B cell (primary cell): ENCODE measurements at regions of chr3 and their contacts with region 1.

Region 1: GRCh38 chr3:53130179-53131061 is at the start of gene RFT1:
- DNase-seq: peak; percentile 98
- ATAC-seq: peak; percentile 90
- H3K4me3 ChIP-seq: peak within 1 kb of the TSS; percentile 76 to 87 (median 87)
- H3K4me3 Mint-ChIP-seq: peak within 1 kb of the TSS; percentile 94
- H3K27ac ChIP-seq: peak within 1 kb of the TSS; percentile 86 to 97
- H3K27ac Mint-ChIP-seq: peak within 1 kb of the TSS; percentile 97
- H3K4me1 ChIP-seq: peaks cover 22 to 23% of the 10 kb centered on the region in 2 donors
- H3K4me1 Mint-ChIP-seq: peaks cover 31% of the 10 kb centered on the region
- H3K27me3 ChIP-seq: no peaks in the 10 kb centered on the region
- H3K27me3 Mint-ChIP-seq: no peaks in the 10 kb centered on the region
- CTCF ChIP-seq: no peak
- total RNA-seq, gene RFT1: 28.9 and 30.7 TPM in 2 replicates

Region 2: GRCh38 chr3:52705688-52706686 is 424.4 kb before region 1 on chr3 and contains the starts of genes GLT8D1 and SPCS1:
- CTCF ChIA-PET with region 1: no interaction called
- POLR2A ChIA-PET with region 1: no interaction called
- intact Hi-C with region 1: loop called (anchors 1 kb)
- DNase-seq: peak; percentile 97
- ATAC-seq: peak; percentile 86
- H3K4me3 ChIP-seq: peak within 1 kb of the TSS; percentile 75 to 91 (median 82)
- H3K4me3 Mint-ChIP-seq: peak within 1 kb of the TSS; percentile 96
- H3K27ac ChIP-seq: peak within 1 kb of the TSS; percentile 66 to 95
- H3K27ac Mint-ChIP-seq: peak within 1 kb of the TSS; percentile 97
- H3K4me1 ChIP-seq: peaks cover 40 to 44% of the 10 kb centered on the region in 2 donors
- H3K4me1 Mint-ChIP-seq: peaks cover 46% of the 10 kb centered on the region
- H3K27me3 ChIP-seq: no peaks in the 10 kb centered on the region
- H3K27me3 Mint-ChIP-seq: no peaks in the 10 kb centered on the region
- CTCF ChIP-seq: no peak
- total RNA-seq, gene GLT8D1: 28.7 and 32.5 TPM in 2 replicates
- total RNA-seq, gene SPCS1: 54.3 and 64.5 TPM in 2 replicates

Region 3: DNA sequence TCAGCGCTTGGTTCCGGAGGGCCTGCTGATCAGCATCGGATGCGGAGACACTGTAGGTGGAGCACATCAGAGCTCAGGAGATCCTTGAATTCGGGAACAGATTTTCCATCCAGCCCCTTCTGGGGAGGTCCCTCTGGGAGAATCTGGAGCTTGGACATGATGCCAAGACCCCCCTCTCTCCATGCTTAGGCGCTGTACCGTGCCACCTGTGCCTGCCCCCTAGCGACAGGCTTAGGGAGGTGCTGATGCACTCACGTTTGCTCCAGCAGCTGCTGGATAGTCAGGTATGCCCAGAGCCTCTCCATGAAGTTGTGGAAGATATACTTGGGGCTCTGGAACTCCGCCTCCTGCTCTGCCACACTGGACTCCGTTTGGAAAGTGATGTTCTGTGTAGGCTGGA is 309.7 kb before region 1 on chr3:
- CTCF ChIA-PET with region 1: no interaction called
- POLR2A ChIA-PET with region 1: no interaction called
- intact Hi-C with region 1: no loop called
- DNase-seq: peak; percentile 41
- ATAC-seq: no peak
- H3K4me3 ChIP-seq: no peak overlapping the region
- H3K4me3 Mint-ChIP-seq: no peak overlapping the region
- H3K27ac ChIP-seq: no peak overlapping the region
- H3K27ac Mint-ChIP-seq: no peak overlapping the region
- H3K4me1 ChIP-seq: no peaks in the 10 kb centered on the region
- H3K4me1 Mint-ChIP-seq: no peaks in the 10 kb centered on the region
- H3K27me3 ChIP-seq: no peaks in the 10 kb centered on the region
- H3K27me3 Mint-ChIP-seq: no peaks in the 10 kb centered on the region
- CTCF ChIP-seq: peak; percentile 62

Region 4: DNA sequence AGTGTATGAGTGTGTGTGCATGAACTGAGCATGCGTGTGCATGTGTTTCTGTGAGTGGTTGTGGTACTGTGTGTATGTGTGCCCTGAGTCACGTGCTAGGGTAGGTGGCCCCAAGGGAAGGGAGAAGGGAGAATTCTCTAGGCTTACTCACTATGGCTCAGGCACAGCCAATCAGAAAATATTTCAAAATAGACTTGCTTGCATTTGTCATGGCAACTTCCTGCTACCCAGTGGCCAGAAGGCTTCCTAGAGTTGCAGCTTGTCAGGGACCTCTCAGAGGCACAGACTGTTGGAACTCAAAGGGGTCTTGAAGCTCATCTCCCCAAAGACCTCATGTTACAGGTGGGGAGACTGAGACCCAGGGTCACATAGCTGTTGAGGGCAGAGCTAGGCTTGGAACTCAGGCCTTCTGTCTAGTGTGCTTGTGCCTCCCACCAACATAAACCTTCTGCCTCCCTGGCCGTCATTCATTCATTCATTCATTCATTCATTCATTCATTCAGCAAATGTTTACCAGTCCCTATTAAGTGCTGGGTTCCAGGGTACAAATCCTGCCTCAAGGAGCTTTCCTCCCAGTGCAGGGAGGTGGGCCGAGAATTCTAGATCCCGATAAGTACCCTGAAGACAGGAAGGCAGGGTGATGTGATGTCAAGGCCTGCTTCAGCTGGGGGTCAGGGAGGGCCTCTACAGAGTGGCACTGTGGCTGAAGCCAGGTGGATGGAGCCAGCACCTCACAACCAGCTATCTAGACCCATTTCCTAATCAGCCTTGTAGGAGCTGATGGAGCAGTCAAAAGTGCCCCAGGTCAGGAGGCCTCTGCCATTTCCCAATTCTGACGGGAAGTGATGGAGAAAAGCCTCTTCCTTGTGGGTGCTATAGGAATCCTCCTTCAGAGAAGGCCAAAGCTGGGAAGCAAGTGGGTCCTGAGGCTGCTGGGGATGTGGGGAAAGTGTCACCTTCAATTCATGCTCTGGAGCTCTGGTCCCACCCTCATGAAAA is 10.7 kb after region 1 on chr3:
- CTCF ChIA-PET with region 1: interaction called, 20 read pairs
- POLR2A ChIA-PET with region 1: interaction called, 5 read pairs
- intact Hi-C with region 1: no loop called
- DNase-seq: no peak
- ATAC-seq: no peak
- H3K4me3 ChIP-seq: no peak overlapping the region
- H3K4me3 Mint-ChIP-seq: no peak overlapping the region
- H3K27ac ChIP-seq: no peak overlapping the region
- H3K27ac Mint-ChIP-seq: no peak overlapping the region
- H3K4me1 ChIP-seq: no peaks in the 10 kb centered on the region
- H3K4me1 Mint-ChIP-seq: no peaks in the 10 kb centered on the region
- H3K27me3 ChIP-seq: no peaks in the 10 kb centered on the region
- H3K27me3 Mint-ChIP-seq: no peaks in the 10 kb centered on the region
- CTCF ChIP-seq: no peak

Region 5: GRCh38 chr3:53166781-53167291 is 36.4 kb after region 1 on chr3:
- CTCF ChIA-PET with region 1: interaction called, 27 read pairs
- POLR2A ChIA-PET with region 1: interaction called, 4 read pairs
- intact Hi-C with region 1: no loop called
- DNase-seq: no peak
- ATAC-seq: no peak
- H3K4me3 ChIP-seq: no peak overlapping the region
- H3K4me3 Mint-ChIP-seq: peak overlapping the region; percentile 6
- H3K27ac ChIP-seq: peak overlapping the region; percentile 46 to 59
- H3K27ac Mint-ChIP-seq: peak overlapping the region; percentile 68
- H3K4me1 ChIP-seq: peaks cover 85 to 99% of the 10 kb centered on the region in 2 donors
- H3K4me1 Mint-ChIP-seq: peaks cover 92% of the 10 kb centered on the region
- H3K27me3 ChIP-seq: no peaks in the 10 kb centered on the region
- H3K27me3 Mint-ChIP-seq: no peaks in the 10 kb centered on the region
- CTCF ChIP-seq: no peak

Region 6: GRCh38 chr3:53195602-53196574 is 65.5 kb after region 1 on chr3:
- CTCF ChIA-PET with region 1: interaction called, 318 read pairs
- POLR2A ChIA-PET with region 1: interaction called, 12 read pairs
- intact Hi-C with region 1: loop called (anchors 1 kb)
- DNase-seq: peak; percentile 81
- ATAC-seq: peak; percentile 62
- H3K4me3 ChIP-seq: no peak overlapping the region
- H3K4me3 Mint-ChIP-seq: peak overlapping the region; percentile 21
- H3K27ac ChIP-seq: no peak overlapping the region
- H3K27ac Mint-ChIP-seq: no peak overlapping the region
- H3K4me1 ChIP-seq: peaks cover 26 to 56% of the 10 kb centered on the region in 2 donors
- H3K4me1 Mint-ChIP-seq: peaks cover 35% of the 10 kb centered on the region
- H3K27me3 ChIP-seq: no peaks in the 10 kb centered on the region
- H3K27me3 Mint-ChIP-seq: no peaks in the 10 kb centered on the region
- CTCF ChIP-seq: peak; percentile 99

Region 7: GRCh38 chr3:53347261-53348064 is 217.0 kb after region 1 on chr3 and contains the start of gene DCP1A:
- CTCF ChIA-PET with region 1: no interaction called
- POLR2A ChIA-PET with region 1: no interaction called
- intact Hi-C with region 1: loop called (anchors 1 kb)
- DNase-seq: peak; percentile 97
- ATAC-seq: peak; percentile 93
- H3K4me3 ChIP-seq: peak within 1 kb of the TSS; percentile 86 to 99 (median 96)
- H3K4me3 Mint-ChIP-seq: peak within 1 kb of the TSS; percentile 100
- H3K27ac ChIP-seq: peak within 1 kb of the TSS; percentile 89 to 95
- H3K27ac Mint-ChIP-seq: peak within 1 kb of the TSS; percentile 99
- H3K4me1 ChIP-seq: peaks cover 11 to 15% of the 10 kb centered on the region in 2 donors
- H3K4me1 Mint-ChIP-seq: peaks cover 23% of the 10 kb centered on the region
- H3K27me3 ChIP-seq: no peaks in the 10 kb centered on the region
- H3K27me3 Mint-ChIP-seq: no peaks in the 10 kb centered on the region
- CTCF ChIP-seq: no peak
- total RNA-seq, gene DCP1A: 44.6 and 47.7 TPM in 2 replicates